ENCODE measurements at regions of chrX and their contacts with region 1.

Region 1: DNA sequence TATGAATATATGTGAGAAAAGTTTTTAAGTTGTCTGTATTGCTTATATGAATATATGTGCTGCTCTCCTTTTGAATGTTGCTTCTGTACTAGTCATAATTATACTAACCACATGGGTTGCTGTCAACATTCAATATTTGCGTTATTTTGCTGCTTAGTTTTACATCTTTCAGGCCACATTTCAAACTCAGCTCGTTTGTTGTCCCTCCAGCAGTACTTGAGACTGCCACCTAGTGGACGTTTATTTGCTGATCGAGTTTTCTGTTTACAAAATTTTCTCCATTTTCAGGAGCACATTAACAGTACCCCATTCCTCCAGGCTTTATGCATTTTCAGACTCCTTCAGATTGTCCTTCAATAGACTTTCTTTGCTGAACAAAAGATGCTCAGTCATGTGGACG is 75.8 kb downstream of the NUDT11 start:
- DNase-seq: peak; percentile 61
- ATAC-seq: no peak
- H3K4me3 ChIP-seq: no peak overlapping the region
- H3K4me3 Mint-ChIP-seq: no peak overlapping the region
- H3K27ac ChIP-seq: no peak overlapping the region
- H3K27ac Mint-ChIP-seq: no peak overlapping the region
- H3K4me1 ChIP-seq: peaks cover 0 to 5% of the 10 kb centered on the region in 2 donors
- H3K4me1 Mint-ChIP-seq: peaks cover 11% of the 10 kb centered on the region
- H3K27me3 ChIP-seq: peaks cover 0 to 3% (median 0%) of the 10 kb centered on the region in 4 experiments
- H3K27me3 Mint-ChIP-seq: no peaks in the 10 kb centered on the region
- CTCF ChIP-seq: peak; percentile 73

Region 2: GRCh38 chrX:51292421-51292820 is 128.2 kb before region 1 on chrX:
- CTCF ChIA-PET with region 1: no interaction called
- POLR2A ChIA-PET with region 1: no interaction called
- intact Hi-C with region 1: no loop called
- DNase-seq: no peak
- ATAC-seq: no peak
- H3K4me3 ChIP-seq: no peak overlapping the region
- H3K4me3 Mint-ChIP-seq: no peak overlapping the region
- H3K27ac ChIP-seq: no peak overlapping the region
- H3K27ac Mint-ChIP-seq: no peak overlapping the region
- H3K4me1 ChIP-seq: no peaks in the 10 kb centered on the region
- H3K4me1 Mint-ChIP-seq: no peaks in the 10 kb centered on the region
- H3K27me3 ChIP-seq: no peaks in the 10 kb centered on the region
- H3K27me3 Mint-ChIP-seq: no peaks in the 10 kb centered on the region
- CTCF ChIP-seq: no peak

Region 3: DNA sequence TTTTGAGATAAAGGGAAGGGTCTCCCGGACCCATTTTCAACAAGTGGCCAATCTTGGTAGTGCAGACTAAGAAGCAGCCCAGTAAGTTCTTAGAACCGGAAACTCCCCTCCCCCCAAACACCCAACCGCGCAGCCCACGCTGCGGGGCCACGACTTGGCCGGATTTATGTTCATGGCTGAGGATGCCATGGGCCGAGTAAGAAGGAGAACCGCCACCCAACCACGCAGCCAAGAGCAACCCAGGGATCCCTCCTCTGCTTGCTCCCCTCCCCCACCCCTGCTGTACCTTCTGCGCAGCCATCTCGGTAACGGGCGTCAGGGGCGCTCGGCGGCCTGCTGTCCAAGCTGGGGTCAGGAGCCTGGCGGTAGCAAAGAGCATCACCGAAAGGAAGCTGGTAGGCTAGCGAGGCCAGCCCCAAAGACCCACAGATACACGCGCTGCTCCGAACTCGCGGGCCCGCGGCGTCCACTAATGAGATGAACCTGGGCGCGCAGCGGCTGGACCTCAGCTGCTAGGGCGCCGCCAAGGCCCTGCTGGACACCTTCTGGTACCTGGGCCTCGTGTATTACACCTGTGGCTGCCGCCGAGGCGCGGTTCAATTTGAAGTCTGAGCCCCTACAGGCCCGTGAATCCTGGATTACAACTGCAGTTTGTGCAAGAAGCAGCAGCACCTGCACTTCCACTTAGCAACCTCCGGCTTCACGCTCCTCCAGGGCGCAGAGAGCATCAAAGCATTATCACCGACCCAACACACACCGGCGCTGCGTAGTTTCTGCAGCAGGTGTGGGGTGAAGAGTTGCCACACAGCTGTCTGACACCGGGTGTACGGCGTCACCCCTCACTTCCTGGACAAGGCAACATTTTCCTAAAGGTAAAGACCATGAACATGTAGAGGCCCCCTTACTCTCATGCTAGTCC is 24.5 kb before region 1 on chrX:
- CTCF ChIA-PET with region 1: interaction called, 18 read pairs
- POLR2A ChIA-PET with region 1: no interaction called
- intact Hi-C with region 1: no loop called
- DNase-seq: peak; percentile 73
- ATAC-seq: peak; percentile 73
- H3K4me3 ChIP-seq: peak overlapping the region; percentile 5 to 63 (median 61)
- H3K4me3 Mint-ChIP-seq: peak overlapping the region; percentile 94
- H3K27ac ChIP-seq: peak overlapping the region; percentile 54 to 58
- H3K27ac Mint-ChIP-seq: peak overlapping the region; percentile 94
- H3K4me1 ChIP-seq: peaks cover 3 to 11% of the 10 kb centered on the region in 2 donors
- H3K4me1 Mint-ChIP-seq: peaks cover 24% of the 10 kb centered on the region
- H3K27me3 ChIP-seq: no peaks in the 10 kb centered on the region
- H3K27me3 Mint-ChIP-seq: no peaks in the 10 kb centered on the region
- CTCF ChIP-seq: peak; percentile 48

Region 4: DNA sequence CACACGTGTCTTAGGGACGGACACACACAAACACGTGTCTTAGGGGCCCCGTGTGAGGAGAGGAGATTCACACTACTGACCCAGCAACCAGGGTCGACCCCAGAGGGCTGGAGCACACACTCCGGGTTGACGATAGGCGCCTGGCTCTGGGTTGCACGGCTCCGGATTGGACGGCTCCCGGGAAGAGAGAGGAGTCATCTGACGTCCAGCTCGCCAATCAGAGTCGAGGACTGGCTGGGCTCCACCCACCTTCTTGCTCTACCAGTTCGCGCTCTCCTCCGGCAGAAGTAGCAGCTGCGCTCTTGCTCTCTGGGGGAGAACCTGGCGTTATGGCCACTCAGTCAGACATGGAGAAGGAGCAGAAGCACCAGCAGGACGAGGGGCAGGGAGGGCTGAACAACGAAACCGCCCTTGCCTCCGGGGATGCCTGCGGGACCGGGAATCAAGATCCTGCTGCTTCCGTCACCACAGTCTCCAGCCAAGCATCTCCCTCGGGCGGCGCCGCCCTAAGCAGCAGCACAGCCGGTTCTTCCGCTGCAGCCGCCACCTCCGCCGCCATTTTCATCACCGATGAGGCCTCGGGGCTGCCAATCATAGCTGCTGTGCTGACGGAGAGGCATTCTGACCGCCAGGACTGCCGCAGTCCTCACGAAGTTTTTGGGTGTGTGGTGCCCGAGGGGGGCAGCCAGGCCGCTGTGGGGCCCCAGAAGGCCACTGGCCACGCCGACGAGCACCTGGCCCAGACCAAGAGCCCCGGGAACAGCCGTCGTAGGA is 13.7 kb before region 1 on chrX:
- CTCF ChIA-PET with region 1: interaction called, 13 read pairs
- POLR2A ChIA-PET with region 1: no interaction called
- intact Hi-C with region 1: no loop called
- DNase-seq: no peak
- ATAC-seq: no peak
- H3K4me3 ChIP-seq: no peak overlapping the region
- H3K4me3 Mint-ChIP-seq: no peak overlapping the region
- H3K27ac ChIP-seq: no peak overlapping the region
- H3K27ac Mint-ChIP-seq: no peak overlapping the region
- H3K4me1 ChIP-seq: no peaks in the 10 kb centered on the region
- H3K4me1 Mint-ChIP-seq: no peaks in the 10 kb centered on the region
- H3K27me3 ChIP-seq: no peaks in the 10 kb centered on the region
- H3K27me3 Mint-ChIP-seq: no peaks in the 10 kb centered on the region
- CTCF ChIP-seq: no peak

Region 5: DNA sequence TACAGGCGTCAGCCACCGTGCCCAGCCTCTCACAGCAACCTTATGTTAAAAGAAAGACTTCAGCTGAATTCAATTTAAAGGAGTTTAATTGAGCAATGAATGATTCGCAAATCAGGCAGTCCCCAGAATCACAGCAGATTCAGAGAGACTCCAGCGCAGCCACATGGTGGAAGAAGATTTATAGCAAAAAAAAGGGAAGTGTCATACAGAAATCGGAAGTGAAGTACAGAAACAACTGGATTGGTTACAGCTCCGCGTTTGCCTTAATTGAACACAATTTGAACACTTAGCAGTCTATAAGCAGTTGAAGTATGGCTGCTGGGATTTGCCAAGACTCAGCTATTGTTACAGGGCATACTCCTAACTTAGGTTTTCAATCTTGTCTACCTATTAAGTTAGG is 178.3 kb after region 1 on chrX:
- CTCF ChIA-PET with region 1: no interaction called
- POLR2A ChIA-PET with region 1: no interaction called
- intact Hi-C with region 1: no loop called
- DNase-seq: no peak
- ATAC-seq: no peak
- H3K4me3 ChIP-seq: no peak overlapping the region
- H3K4me3 Mint-ChIP-seq: no peak overlapping the region
- H3K27ac ChIP-seq: no peak overlapping the region
- H3K27ac Mint-ChIP-seq: no peak overlapping the region
- H3K4me1 ChIP-seq: no peaks in the 10 kb centered on the region
- H3K4me1 Mint-ChIP-seq: no peaks in the 10 kb centered on the region
- H3K27me3 ChIP-seq: peaks cover 0 to 8% (median 0%) of the 10 kb centered on the region in 4 experiments
- H3K27me3 Mint-ChIP-seq: peaks cover 13% of the 10 kb centered on the region
- CTCF ChIP-seq: no peak

Region 6: DNA sequence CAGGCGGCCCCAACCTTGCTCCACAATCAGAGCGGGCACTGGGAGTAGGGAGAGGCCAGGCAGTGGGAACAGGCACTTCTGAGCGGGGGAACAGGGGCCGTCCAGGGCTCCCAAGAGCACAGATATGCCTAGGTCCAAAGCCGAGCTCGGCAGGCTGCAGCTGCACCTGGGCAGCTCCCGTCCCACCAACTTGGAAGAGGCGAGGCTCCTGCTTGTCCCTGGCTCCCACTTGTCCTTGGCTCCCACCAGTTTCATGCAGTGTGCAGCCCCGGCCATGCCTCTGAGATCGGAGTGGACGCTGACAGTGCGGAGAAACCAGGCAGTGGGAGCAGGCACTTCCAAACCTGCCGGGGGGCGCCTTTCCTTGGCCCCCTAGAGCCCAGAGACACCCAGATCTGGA is 864.3 kb after region 1 on chrX:
- CTCF ChIA-PET with region 1: no interaction called
- POLR2A ChIA-PET with region 1: no interaction called
- intact Hi-C with region 1: no loop called
- DNase-seq: no peak
- ATAC-seq: no peak
- H3K4me3 ChIP-seq: no peak overlapping the region
- H3K4me3 Mint-ChIP-seq: no peak overlapping the region
- H3K27ac ChIP-seq: no peak overlapping the region
- H3K27ac Mint-ChIP-seq: no peak overlapping the region
- H3K4me1 ChIP-seq: peaks cover 7 to 16% of the 10 kb centered on the region in 2 donors
- H3K4me1 Mint-ChIP-seq: peaks cover 12% of the 10 kb centered on the region
- H3K27me3 ChIP-seq: peaks cover 0 to 4% (median 0%) of the 10 kb centered on the region in 4 experiments
- H3K27me3 Mint-ChIP-seq: no peaks in the 10 kb centered on the region
- CTCF ChIP-seq: no peak

Measured in B cell (primary cell).